CD8-positive, alpha-beta T cell (primary cell): ENCODE measurements at regions of chr14 and their contacts with region 1.

Region 1: DNA sequence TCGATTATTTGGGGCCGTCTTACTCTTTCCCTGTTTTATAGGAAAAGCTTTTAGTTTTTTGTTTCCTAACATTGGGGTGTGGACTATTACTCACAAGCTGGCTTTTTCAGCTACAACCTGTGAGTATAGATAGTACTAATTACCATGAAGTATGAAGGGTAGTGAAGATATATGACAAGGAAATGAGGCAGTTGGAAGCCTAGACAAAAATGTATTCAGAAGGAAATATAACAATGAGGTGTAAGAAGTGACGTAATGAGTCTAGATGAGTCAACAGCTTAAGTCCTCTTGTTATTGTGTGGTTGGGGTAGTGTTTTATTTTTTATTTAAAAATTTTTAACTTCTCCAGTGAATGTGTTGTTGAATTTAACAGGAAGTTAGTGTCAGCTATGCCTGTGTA is 804.5 kb downstream of the NRXN3 start:
- DNase-seq: no peak
- ATAC-seq: no peak
- H3K4me3 ChIP-seq: no peak overlapping the region
- H3K4me3 Mint-ChIP-seq: no peak overlapping the region
- H3K27ac ChIP-seq: no peak overlapping the region
- H3K27ac Mint-ChIP-seq: no peak overlapping the region
- H3K4me1 ChIP-seq: no peaks in the 10 kb centered on the region
- H3K4me1 Mint-ChIP-seq: no peaks in the 10 kb centered on the region
- H3K27me3 ChIP-seq: no peaks in the 10 kb centered on the region
- H3K27me3 Mint-ChIP-seq: peaks cover 8% of the 10 kb centered on the region
- CTCF ChIP-seq: no peak

Region 2: GRCh38 chr14:78725086-78725485 is 249.6 kb before region 1 on chr14:
- CTCF ChIA-PET with region 1: no interaction called
- POLR2A ChIA-PET with region 1: no interaction called
- intact Hi-C with region 1: no loop called
- DNase-seq: no peak
- ATAC-seq: no peak
- H3K4me3 ChIP-seq: no peak overlapping the region
- H3K4me3 Mint-ChIP-seq: no peak overlapping the region
- H3K27ac ChIP-seq: no peak overlapping the region
- H3K27ac Mint-ChIP-seq: no peak overlapping the region
- H3K4me1 ChIP-seq: no peaks in the 10 kb centered on the region
- H3K4me1 Mint-ChIP-seq: no peaks in the 10 kb centered on the region
- H3K27me3 ChIP-seq: no peaks in the 10 kb centered on the region
- H3K27me3 Mint-ChIP-seq: peaks cover 3% of the 10 kb centered on the region
- CTCF ChIP-seq: no peak

Region 3: GRCh38 chr14:78933948-78934524 is 40.7 kb before region 1 on chr14:
- CTCF ChIA-PET with region 1: no interaction called
- POLR2A ChIA-PET with region 1: no interaction called
- intact Hi-C with region 1: loop called in 1 of 2 experiments (anchors 1 kb)
- DNase-seq: peak in 1 of 9 experiments; percentile 8
- ATAC-seq: no peak
- H3K4me3 ChIP-seq: no peak overlapping the region
- H3K4me3 Mint-ChIP-seq: no peak overlapping the region
- H3K27ac ChIP-seq: no peak overlapping the region
- H3K27ac Mint-ChIP-seq: no peak overlapping the region
- H3K4me1 ChIP-seq: no peaks in the 10 kb centered on the region
- H3K4me1 Mint-ChIP-seq: no peaks in the 10 kb centered on the region
- H3K27me3 ChIP-seq: no peaks in the 10 kb centered on the region
- H3K27me3 Mint-ChIP-seq: no peaks in the 10 kb centered on the region
- CTCF ChIP-seq: no peak